GM12878 (cell line): ENCODE measurements at regions of chr9 and their contacts with region 1.

Region 1: DNA sequence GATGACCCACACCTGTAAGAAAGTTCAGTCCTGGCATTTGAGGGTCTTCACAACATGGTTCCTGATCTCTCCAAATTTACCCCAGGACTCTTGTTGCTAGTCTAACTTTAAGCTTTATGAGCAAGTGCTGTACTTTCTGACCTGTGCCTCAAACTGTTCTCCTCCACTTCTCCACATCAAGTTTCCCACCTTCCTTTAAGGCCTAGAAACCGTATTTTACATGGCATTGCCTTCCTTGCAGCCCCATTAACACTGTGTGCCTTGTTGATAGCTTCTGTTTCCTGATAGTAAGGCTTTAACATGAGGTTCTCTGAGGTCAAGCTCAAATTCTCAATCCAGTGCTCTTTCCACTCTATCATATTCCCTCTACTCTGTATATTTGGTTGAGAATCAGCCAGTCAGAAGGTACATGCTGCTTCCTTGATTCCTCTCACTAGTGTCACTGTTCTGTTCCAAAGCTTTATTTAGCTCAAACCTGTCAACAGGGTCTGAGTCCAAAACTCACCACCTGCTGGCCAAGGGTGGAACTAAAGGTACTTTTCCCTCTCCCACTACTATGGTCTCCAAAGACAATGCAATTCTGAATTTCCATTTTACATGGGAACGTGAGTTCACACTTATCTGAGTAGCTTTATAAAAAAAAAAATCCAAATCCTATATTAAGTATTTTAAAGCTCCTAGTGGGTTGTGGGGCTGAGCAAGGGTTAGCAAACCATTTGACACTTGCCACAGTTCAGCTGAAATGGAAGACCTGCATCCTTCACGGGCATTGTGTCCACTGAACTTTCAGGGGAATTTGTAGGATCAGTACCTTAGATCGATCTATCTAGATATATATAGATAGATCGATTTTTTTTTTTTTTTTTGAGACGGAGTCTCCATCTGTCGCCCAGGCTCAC is 21.1 kb downstream of the VCP start:
- DNase-seq: no peak
- ATAC-seq: peak; percentile 93
- H3K4me3 ChIP-seq: no peak overlapping the region
- H3K27ac ChIP-seq: no peak overlapping the region
- H3K4me1 ChIP-seq: no peaks in the 10 kb centered on the region
- H3K27me3 ChIP-seq: no peaks in the 10 kb centered on the region
- CTCF ChIP-seq: peak; percentile 64 to 66 (median 64); a peak in 5 of 6 replicates
- EP300 ChIP-seq: no peak
- POLR2A ChIP-seq: no peak
- RAD21 ChIP-seq: peak; percentile 72

Region 2: GRCh38 chr9:34989003-34989945 is 62.0 kb before region 1 on chr9 and contains the start of gene DNAJB5:
- CTCF ChIA-PET with region 1: interaction called, 58 read pairs
- POLR2A ChIA-PET with region 1: interaction called, 6 read pairs
- RAD21 ChIA-PET with region 1: interaction called, 35 read pairs
- SMC1A ChIA-PET with region 1: interaction called, 33 read pairs
- in situ Hi-C with region 1: no loop called
- intact Hi-C with region 1: loop called (anchors 5 kb)
- DNase-seq: peak; percentile 97
- ATAC-seq: peak; percentile 92
- H3K4me3 ChIP-seq: peak within 1 kb of the TSS; percentile 95
- H3K27ac ChIP-seq: peak within 1 kb of the TSS; percentile 79
- H3K4me1 ChIP-seq: peaks cover 51% of the 10 kb centered on the region
- H3K27me3 ChIP-seq: no peaks in the 10 kb centered on the region
- CTCF ChIP-seq: no peak
- EP300 ChIP-seq: no peak
- POLR2A ChIP-seq: peak; percentile 71
- RAD21 ChIP-seq: no peak
- polyA plus RNA-seq, gene DNAJB5: 0.92 to 1.5 TPM

Region 3: DNA sequence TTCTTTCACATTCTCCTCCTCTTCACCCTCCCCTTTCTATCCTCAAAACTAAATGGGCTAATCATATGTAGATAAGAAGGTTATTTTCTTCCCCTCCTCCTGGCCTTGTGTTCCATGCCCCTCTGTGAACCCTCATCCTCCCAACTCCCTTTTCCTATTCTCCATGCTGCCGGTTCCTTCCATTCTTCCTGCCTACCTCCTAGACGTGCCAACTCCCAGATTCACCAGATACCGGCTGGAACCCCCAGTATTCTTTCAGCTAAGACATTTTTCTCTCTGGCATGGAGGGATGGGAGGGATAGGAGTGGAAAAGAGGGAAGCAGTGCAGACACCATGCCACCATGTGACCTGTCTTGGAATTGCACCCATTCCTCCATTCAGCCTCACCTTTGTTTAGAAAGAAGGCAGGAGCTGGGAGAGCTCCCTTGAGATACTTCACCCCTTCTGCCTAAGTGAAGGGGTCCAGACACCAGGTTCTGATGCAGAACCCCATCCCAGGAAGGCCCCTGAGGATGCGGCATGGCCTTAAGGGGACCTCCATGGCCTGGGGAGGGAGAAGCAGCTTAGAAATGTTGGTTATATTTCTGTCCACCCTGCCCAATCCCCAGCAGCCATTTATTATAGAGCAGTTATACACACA is 56.9 kb before region 1 on chr9:
- CTCF ChIA-PET with region 1: interaction called, 58 read pairs
- POLR2A ChIA-PET with region 1: interaction called, 6 read pairs
- RAD21 ChIA-PET with region 1: interaction called, 35 read pairs
- SMC1A ChIA-PET with region 1: interaction called, 33 read pairs
- in situ Hi-C with region 1: no loop called
- intact Hi-C with region 1: loop called (anchors 5 kb)
- DNase-seq: no peak
- ATAC-seq: no peak
- H3K4me3 ChIP-seq: no peak overlapping the region
- H3K27ac ChIP-seq: peak overlapping the region; percentile 69; the same call in 1 of the 2 replicates
- H3K4me1 ChIP-seq: peaks cover 33% of the 10 kb centered on the region
- H3K27me3 ChIP-seq: no peaks in the 10 kb centered on the region
- CTCF ChIP-seq: peak; percentile 32 to 56 (median 45)
- EP300 ChIP-seq: no peak
- POLR2A ChIP-seq: no peak
- RAD21 ChIP-seq: no peak

Region 4: GRCh38 chr9:35001803-35002502 is 49.4 kb before region 1 on chr9:
- CTCF ChIA-PET with region 1: interaction called, 14 read pairs
- POLR2A ChIA-PET with region 1: no interaction called
- RAD21 ChIA-PET with region 1: interaction called, 5 read pairs
- SMC1A ChIA-PET with region 1: interaction called, 11 read pairs
- in situ Hi-C with region 1: no loop called
- intact Hi-C with region 1: no loop called
- DNase-seq: no peak
- ATAC-seq: peak; percentile 83
- H3K4me3 ChIP-seq: no peak overlapping the region
- H3K27ac ChIP-seq: no peak overlapping the region
- H3K4me1 ChIP-seq: peaks cover 6% of the 10 kb centered on the region; the same call in 1 of the 2 replicates
- H3K27me3 ChIP-seq: no peaks in the 10 kb centered on the region
- CTCF ChIP-seq: no peak
- EP300 ChIP-seq: no peak
- POLR2A ChIP-seq: no peak
- RAD21 ChIP-seq: no peak; the same call in 1 of the 2 replicates

Region 5: GRCh38 chr9:35029852-35030251 is 21.5 kb before region 1 on chr9:
- CTCF ChIA-PET with region 1: interaction called, 39 read pairs
- POLR2A ChIA-PET with region 1: no interaction called
- RAD21 ChIA-PET with region 1: interaction called, 3 read pairs
- SMC1A ChIA-PET with region 1: interaction called, 7 read pairs
- in situ Hi-C with region 1: no loop called
- intact Hi-C with region 1: no loop called
- DNase-seq: no peak
- ATAC-seq: no peak
- H3K4me3 ChIP-seq: no peak overlapping the region
- H3K27ac ChIP-seq: no peak overlapping the region
- H3K4me1 ChIP-seq: no peaks in the 10 kb centered on the region
- H3K27me3 ChIP-seq: no peaks in the 10 kb centered on the region
- CTCF ChIP-seq: no peak
- EP300 ChIP-seq: no peak
- POLR2A ChIP-seq: no peak
- RAD21 ChIP-seq: no peak

Region 6: DNA sequence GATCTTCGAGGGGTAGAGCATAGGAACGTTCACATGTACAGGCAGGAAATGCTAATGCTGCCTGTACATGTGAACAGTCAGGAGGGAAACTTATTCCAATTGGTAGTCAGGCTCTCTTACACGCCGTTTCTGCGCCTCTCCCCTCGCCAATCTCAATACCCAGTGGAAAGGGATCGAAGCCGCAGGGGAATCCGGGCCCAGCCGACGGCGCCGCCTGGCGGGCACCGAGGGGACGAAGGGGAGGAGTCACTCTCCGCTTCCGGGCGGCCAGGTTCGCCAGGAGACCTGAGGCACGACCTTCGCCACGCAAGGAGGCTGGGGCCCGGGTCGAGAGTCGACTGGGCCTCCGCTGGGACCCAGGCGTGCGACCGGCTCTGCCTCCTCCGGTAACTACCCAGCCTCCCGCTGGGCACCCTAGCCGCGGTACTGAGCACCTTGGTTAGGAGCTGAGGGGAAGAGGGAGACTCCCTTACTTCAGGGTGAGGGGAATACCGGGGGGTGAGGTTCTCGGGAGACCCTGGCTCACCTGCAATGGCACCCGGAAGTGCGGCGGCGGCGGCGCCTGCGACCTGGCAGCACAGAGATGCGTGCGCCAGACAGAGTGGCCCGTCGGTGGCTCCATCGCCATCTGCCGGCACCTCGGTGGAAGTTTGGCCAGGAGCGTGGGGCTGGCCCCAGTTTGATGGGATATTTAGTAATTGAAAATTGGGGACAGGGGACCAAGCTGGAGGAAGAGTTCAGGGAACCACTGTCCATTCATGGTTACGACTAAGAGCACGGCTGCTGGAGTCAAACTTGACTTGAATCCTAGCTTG is 44.9 kb after region 1 on chr9 and contains the start of gene PIGO:
- CTCF ChIA-PET with region 1: interaction called, 17 read pairs
- POLR2A ChIA-PET with region 1: no interaction called
- RAD21 ChIA-PET with region 1: interaction called, 3 read pairs
- SMC1A ChIA-PET with region 1: interaction called, 4 read pairs
- in situ Hi-C with region 1: no loop called
- intact Hi-C with region 1: no loop called
- DNase-seq: no peak
- ATAC-seq: peak; percentile 95
- H3K4me3 ChIP-seq: peak within 1 kb of the TSS; percentile 81
- H3K27ac ChIP-seq: peak within 1 kb of the TSS; percentile 100
- H3K4me1 ChIP-seq: peaks cover 7% of the 10 kb centered on the region
- H3K27me3 ChIP-seq: no peaks in the 10 kb centered on the region
- CTCF ChIP-seq: peak; percentile 87 to 98 (median 96)
- EP300 ChIP-seq: no peak
- POLR2A ChIP-seq: peak; percentile 98
- RAD21 ChIP-seq: peak; percentile 69
- polyA plus RNA-seq, gene PIGO: 8.3 to 13.1 TPM